Activated CD4-positive, alpha-beta T cell treated with anti-CD3 and anti-CD28 coated beads for 36 hours (primary cell): ENCODE measurements at regions of chr14 and their contacts with region 1.

Region 1: DNA sequence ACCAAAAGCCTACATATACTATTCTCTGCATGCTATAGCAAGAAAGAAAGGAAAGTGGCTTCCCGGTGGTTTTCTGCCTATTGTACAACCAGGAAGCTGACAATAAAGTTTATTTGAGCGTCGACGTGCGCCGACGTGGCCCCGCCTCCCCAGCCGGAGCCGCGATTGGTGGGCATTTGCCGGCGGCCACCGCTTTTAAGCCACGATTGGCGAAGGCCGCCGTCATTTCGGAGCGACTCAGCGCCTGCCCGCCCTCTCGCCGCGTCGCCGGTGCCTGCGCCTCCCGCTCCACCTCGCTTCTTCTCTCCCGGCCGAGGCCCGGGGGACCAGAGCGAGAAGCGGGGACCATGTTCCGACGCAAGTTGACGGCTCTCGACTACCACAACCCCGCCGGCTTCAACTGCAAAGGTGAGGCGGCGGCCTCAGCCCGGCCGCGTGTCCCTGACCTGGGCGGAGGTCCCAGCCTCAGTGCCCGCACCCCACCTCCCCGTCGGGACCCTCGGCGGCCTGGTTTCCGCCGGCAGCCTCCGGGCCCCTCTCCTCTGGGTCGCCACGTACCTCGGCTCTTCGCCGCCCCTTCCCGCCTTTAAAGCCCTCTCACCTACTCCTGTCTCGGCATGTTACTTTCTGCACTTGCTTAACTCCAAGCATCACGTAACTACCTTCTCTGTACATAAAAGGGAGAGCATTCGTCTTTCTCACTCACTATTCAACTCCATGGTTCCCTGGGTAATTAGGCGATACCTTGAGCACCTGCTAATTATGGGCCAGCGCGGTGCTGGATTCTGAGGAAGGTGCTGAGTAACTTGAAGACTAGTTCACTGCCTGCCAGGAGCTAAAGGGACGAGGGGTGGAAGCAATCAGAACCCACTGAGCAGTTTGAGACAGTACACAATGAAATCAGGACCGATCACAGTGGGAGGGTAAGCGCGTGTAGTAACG is at the start of gene RTRAF:
- DNase-seq: peak; percentile 96
- ATAC-seq: peak; percentile 97
- H3K4me3 Mint-ChIP-seq: peak within 1 kb of the TSS; percentile 100
- H3K27ac Mint-ChIP-seq: peak within 1 kb of the TSS; percentile 98
- H3K4me1 Mint-ChIP-seq: peaks cover 40% of the 10 kb centered on the region
- H3K27me3 Mint-ChIP-seq: no peaks in the 10 kb centered on the region
- total RNA-seq, gene RTRAF: 232 to 254 TPM

Region 2: GRCh38 chr14:51094901-51095853 is 894.4 kb before region 1 on chr14 and contains the start of gene TRIM9:
- CTCF ChIA-PET with region 1: no interaction called
- POLR2A ChIA-PET with region 1: no interaction called
- intact Hi-C with region 1: loop called in 1 of 2 experiments (anchors 10 kb)
- DNase-seq: peak; percentile 97
- ATAC-seq: peak; percentile 97
- H3K4me3 Mint-ChIP-seq: peak within 1 kb of the TSS; percentile 79
- H3K27ac Mint-ChIP-seq: peak within 1 kb of the TSS; percentile 79
- H3K4me1 Mint-ChIP-seq: peaks cover 15% of the 10 kb centered on the region
- H3K27me3 Mint-ChIP-seq: peaks cover 10% of the 10 kb centered on the region
- total RNA-seq, gene TRIM9: 2.4 TPM

Region 3: DNA sequence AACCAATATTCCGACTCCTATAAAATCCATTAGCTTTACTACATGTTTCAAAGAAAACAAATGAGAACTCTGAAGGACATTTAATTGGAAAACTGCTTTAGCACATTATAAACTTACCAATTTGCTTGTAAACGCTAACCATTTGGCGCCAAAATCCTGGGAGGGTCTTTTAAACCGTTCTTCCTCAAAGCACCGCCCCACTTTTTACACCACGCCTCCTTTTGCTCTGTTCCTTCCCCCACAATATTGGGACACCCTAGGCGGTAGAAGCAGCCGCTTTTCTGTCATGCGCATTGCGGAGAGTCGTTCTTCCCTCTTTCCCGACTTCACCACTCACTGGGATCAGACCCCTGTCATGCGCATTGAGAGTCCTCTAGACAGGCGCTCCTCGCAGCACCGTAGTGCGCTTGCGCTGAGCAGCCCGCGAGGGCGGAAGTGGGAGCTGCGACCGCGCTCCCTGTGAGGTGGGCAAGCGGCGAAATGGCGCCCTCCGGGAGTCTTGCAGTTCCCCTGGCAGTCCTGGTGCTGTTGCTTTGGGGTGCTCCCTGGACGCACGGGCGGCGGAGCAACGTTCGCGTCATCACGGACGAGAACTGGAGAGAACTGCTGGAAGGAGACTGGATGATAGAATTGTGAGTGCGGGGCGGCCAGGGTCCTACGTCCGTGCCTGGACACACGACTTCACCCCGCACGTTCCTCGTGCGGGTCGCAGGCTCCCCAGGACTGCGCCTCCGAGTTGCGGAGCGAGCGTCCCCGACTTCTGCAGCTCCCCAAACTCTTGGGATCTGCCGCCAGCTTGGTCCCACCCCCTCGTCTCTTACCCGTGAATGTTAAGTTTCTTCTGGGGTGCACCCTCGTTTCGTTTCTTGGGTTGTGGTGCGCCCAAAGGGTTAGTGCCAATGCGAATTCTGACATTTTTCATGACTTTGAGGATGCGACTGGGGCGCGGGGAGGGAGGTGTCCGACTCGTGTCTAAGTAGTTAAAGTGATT is 749.5 kb before region 1 on chr14 and contains the start of gene TMX1:
- CTCF ChIA-PET with region 1: no interaction called
- POLR2A ChIA-PET with region 1: no interaction called
- intact Hi-C with region 1: loop called in 1 of 2 experiments (anchors 1 kb)
- DNase-seq: peak; percentile 94
- ATAC-seq: peak; percentile 93
- H3K4me3 Mint-ChIP-seq: no peak within 1 kb of the TSS
- H3K27ac Mint-ChIP-seq: no peak within 1 kb of the TSS
- H3K4me1 Mint-ChIP-seq: peaks cover 15% of the 10 kb centered on the region
- H3K27me3 Mint-ChIP-seq: no peaks in the 10 kb centered on the region
- total RNA-seq, gene TMX1: 38.8 to 55.9 TPM

Region 4: GRCh38 chr14:51369814-51370213 is 619.8 kb before region 1 on chr14:
- CTCF ChIA-PET with region 1: no interaction called
- POLR2A ChIA-PET with region 1: no interaction called
- intact Hi-C with region 1: loop called in 1 of 2 experiments (anchors 10 kb)
- DNase-seq: peak; percentile 52
- ATAC-seq: no peak
- H3K4me3 Mint-ChIP-seq: no peak overlapping the region
- H3K27ac Mint-ChIP-seq: no peak overlapping the region
- H3K4me1 Mint-ChIP-seq: no peaks in the 10 kb centered on the region
- H3K27me3 Mint-ChIP-seq: peaks cover 7% of the 10 kb centered on the region

Region 5: GRCh38 chr14:51873221-51873893 is 116.2 kb before region 1 on chr14:
- CTCF ChIA-PET with region 1: no interaction called
- POLR2A ChIA-PET with region 1: no interaction called
- intact Hi-C with region 1: loop called in 1 of 2 experiments (anchors 1 kb)
- DNase-seq: peak; percentile 63
- ATAC-seq: peak; percentile 83
- H3K4me3 Mint-ChIP-seq: peak overlapping the region; percentile 42
- H3K27ac Mint-ChIP-seq: peak overlapping the region; percentile 79
- H3K4me1 Mint-ChIP-seq: peaks cover 62% of the 10 kb centered on the region
- H3K27me3 Mint-ChIP-seq: no peaks in the 10 kb centered on the region

Region 6: GRCh38 chr14:51957950-51958349 is 31.6 kb before region 1 on chr14:
- CTCF ChIA-PET with region 1: no interaction called
- POLR2A ChIA-PET with region 1: no interaction called
- intact Hi-C with region 1: no loop called
- DNase-seq: no peak
- ATAC-seq: no peak
- H3K4me3 Mint-ChIP-seq: no peak overlapping the region
- H3K27ac Mint-ChIP-seq: no peak overlapping the region
- H3K4me1 Mint-ChIP-seq: peaks cover 38% of the 10 kb centered on the region
- H3K27me3 Mint-ChIP-seq: no peaks in the 10 kb centered on the region

Region 7: DNA sequence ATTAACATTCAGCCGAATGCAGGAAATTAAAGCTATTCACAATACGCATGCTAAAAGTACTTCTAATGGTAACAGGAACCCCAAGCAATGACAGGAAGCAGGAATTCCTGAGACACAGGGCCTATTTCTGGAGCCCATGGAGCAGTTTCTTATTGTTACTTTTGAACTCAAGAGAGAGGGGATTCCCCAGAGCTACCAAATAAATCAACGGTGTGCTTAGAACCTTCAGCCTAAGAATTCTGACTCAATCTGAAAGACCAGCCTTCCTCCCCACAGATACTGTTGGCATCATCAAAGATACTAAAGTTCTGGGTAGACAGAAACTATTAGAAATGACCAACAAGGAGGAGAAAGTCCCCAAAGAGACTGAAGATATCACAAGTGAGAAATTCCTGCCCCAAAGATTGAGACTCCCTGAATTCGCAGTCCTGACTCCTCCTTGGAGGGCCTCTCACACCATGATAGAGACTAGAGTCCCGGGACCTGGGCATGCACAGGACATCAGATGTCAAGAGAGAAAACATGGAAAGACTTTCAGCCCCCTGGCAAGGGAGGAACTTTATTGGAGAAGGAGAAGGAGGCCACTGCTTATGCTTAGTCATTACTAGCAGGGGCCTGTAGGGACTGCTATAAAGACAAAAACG is 32.5 kb after region 1 on chr14:
- CTCF ChIA-PET with region 1: no interaction called
- POLR2A ChIA-PET with region 1: no interaction called
- intact Hi-C with region 1: no loop called
- DNase-seq: no peak
- ATAC-seq: peak; percentile 94
- H3K4me3 Mint-ChIP-seq: no peak overlapping the region
- H3K27ac Mint-ChIP-seq: no peak overlapping the region
- H3K4me1 Mint-ChIP-seq: peaks cover 33% of the 10 kb centered on the region
- H3K27me3 Mint-ChIP-seq: peaks cover 3% of the 10 kb centered on the region

Region 8: DNA sequence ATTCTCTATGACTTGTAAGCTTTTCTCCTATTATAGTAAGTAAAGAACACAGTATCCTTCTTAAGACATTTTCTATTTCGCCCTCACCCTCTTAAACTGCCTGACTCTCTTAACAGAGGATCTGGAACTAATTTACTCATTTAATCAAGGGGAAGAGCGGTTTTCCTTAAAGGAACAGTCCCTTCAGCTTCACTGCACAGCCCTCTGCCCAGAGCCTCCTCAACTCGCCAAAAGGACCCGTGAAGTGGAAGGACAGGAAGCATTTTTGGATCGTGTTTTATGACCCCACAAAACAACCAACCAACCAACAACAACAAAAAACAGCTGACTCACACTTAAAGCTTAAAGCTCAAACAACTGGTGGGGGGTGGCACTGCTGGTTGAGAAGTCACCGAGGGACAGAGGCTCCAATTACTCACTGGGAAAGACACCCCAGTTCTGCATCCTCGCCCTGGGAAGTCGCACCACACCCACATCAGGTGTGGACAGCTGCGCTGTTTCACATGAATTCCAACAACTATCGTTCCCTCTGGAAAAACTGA is 43.6 kb after region 1 on chr14:
- CTCF ChIA-PET with region 1: no interaction called
- POLR2A ChIA-PET with region 1: no interaction called
- intact Hi-C with region 1: no loop called
- DNase-seq: no peak
- ATAC-seq: no peak
- H3K4me3 Mint-ChIP-seq: no peak overlapping the region
- H3K27ac Mint-ChIP-seq: no peak overlapping the region
- H3K4me1 Mint-ChIP-seq: peaks cover 5% of the 10 kb centered on the region
- H3K27me3 Mint-ChIP-seq: peaks cover 17% of the 10 kb centered on the region

Region 9: GRCh38 chr14:52154992-52155650 is 165.6 kb after region 1 on chr14:
- CTCF ChIA-PET with region 1: no interaction called
- POLR2A ChIA-PET with region 1: no interaction called
- intact Hi-C with region 1: no loop called
- DNase-seq: no peak
- ATAC-seq: peak; percentile 65
- H3K4me3 Mint-ChIP-seq: no peak overlapping the region
- H3K27ac Mint-ChIP-seq: no peak overlapping the region
- H3K4me1 Mint-ChIP-seq: peaks cover 16% of the 10 kb centered on the region
- H3K27me3 Mint-ChIP-seq: no peaks in the 10 kb centered on the region

Region 10: DNA sequence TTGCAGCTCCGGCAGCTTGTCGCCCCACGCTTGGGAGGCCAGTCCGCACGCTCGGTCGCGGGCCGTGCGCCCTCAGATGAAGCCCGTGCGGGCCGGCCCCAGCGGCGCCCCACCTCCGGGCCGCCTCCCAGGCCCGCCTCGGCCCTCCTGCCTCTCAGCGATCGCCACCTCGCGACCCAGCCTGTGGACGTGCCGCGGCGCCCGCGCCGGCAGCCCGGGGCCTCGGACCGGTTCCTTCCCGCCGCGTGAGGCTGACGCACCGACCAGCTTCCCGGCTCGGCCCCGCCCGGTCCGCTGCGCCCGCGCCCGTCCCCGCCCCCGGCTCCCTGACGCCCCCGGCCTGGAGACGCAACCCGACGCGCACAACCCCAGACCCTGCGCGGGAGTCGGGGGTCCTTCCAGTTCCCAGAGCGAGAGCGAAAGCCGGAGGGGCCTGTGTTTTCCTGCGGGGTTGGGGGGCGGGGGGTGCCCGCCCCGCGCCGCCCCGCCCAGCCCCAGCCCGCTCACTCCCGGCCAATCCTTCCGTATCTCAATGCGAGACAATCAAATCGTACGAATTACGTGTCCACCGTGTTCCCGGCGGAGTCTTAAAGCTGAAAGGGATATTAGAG is 706.0 kb after region 1 on chr14 and contains the start of gene ERO1A:
- CTCF ChIA-PET with region 1: no interaction called
- POLR2A ChIA-PET with region 1: no interaction called
- intact Hi-C with region 1: loop called in 1 of 2 experiments (anchors 10 kb)
- DNase-seq: peak; percentile 89
- ATAC-seq: peak; percentile 82
- H3K4me3 Mint-ChIP-seq: peak within 1 kb of the TSS; percentile 88
- H3K27ac Mint-ChIP-seq: peak within 1 kb of the TSS; percentile 98
- H3K4me1 Mint-ChIP-seq: peaks cover 33% of the 10 kb centered on the region
- H3K27me3 Mint-ChIP-seq: no peaks in the 10 kb centered on the region
- total RNA-seq, gene ERO1A: 120 to 165 TPM